Gastrocnemius medialis (tissue), 4 donors: ENCODE measurements at regions of chr4 and their contacts with region 1.

Region 1: DNA sequence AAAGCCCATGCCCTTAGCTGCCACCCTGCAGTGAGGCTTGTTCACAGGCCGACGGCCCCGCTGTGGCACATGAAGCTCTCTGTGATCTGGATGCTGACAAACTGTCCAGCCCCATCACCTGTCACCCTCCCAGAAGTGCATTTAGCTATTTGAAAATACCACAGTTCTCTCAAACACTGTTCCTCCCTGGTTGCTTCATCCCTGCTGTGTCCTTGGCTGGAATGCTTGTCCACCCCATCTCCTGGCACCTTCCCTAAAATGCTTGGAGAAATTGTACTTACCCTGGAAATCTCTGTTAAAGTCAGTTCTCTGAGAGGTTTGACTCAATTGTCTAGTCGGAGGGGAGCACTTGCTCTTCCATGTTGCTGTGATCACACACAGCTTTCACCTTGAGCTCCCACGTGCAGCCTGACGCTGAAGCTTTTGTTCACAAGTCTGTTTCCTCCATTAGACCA is 10.1 kb downstream of the SYNPO2 start:
- DNase-seq: peak; percentile 29 to 73
- ATAC-seq: peak; percentile 79 to 84
- H3K4me3 ChIP-seq: peak overlapping the region; percentile 6 to 25 (median 20)
- H3K27ac ChIP-seq: peak overlapping the region; percentile 72 to 88 (median 85)
- H3K4me1 ChIP-seq: peaks cover 32 to 49% of the 10 kb centered on the region in 2 donors
- H3K27me3 ChIP-seq: no peaks in the 10 kb centered on the region
- CTCF ChIP-seq: no peak
- POLR2A ChIP-seq: peak; percentile 12 to 20

Region 2: GRCh38 chr4:118942465-118942864 is 43.8 kb after region 1 on chr4:
- in situ Hi-C with region 1: no loop called
- intact Hi-C with region 1: loop called (anchors 2 kb)
- DNase-seq: peak; percentile 49 to 78
- ATAC-seq: peak; percentile 86 to 93
- H3K4me3 ChIP-seq: no peak overlapping the region
- H3K27ac ChIP-seq: peak overlapping the region; percentile 63 to 81 (median 70)
- H3K4me1 ChIP-seq: peaks cover 27 to 28% of the 10 kb centered on the region in 2 donors
- H3K27me3 ChIP-seq: no peaks in the 10 kb centered on the region
- CTCF ChIP-seq: no peak
- POLR2A ChIP-seq: no peak

Region 3: DNA sequence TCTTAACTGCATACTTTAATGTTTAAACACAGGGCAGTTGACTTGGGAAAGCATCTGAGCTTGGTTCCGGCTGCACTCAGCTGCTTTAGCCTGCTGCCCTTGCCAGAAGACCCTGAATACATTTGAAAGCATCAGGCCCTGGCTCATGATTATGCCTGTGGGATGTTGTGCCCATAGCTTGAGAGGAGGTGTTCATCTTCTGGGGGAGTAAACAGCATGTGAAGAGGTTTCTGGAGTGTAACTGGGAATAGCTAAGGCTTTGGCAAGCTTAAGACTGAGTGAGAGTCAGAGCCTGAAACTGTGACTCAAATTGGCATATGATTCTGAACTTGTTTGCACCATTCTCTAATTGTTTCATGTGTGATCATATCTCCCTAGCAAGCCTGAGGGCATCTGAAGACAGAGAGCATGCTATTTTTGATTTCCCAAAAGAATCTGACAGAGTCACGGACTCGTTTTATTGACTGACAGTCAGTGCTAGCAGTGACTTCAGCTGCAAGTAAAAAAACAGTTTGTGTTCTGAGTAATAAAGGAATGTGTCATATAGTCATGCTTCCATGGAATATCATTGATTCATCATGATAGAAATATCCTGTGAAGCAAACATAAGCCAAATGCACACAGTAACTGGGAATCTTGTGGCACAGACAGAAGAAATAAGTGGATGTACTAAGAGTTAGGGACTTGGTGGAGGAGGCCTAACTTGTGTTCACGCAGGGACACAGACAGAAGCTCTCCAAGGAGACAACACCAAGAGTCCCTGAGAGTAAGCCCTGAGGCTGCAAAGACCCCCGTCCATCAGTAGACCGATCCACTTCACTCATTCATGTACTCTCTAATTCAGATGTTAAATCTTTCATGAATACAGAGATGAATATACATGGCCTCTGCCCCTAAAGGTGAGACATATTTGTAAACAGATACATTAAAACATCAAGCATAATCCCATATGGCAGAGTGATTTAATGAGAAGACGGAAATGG is 90.7 kb after region 1 on chr4:
- in situ Hi-C with region 1: no loop called
- intact Hi-C with region 1: no loop called
- DNase-seq: peak; percentile 54 to 59
- ATAC-seq: peak; percentile 65 to 71
- H3K4me3 ChIP-seq: peak overlapping the region in 1 of 4 donors; percentile 12
- H3K27ac ChIP-seq: peak overlapping the region; percentile 87 to 99 (median 91)
- H3K4me1 ChIP-seq: peaks cover 80 to 84% of the 10 kb centered on the region in 2 donors
- H3K27me3 ChIP-seq: no peaks in the 10 kb centered on the region
- CTCF ChIP-seq: no peak
- POLR2A ChIP-seq: peak; percentile 70 to 80

Region 4: DNA sequence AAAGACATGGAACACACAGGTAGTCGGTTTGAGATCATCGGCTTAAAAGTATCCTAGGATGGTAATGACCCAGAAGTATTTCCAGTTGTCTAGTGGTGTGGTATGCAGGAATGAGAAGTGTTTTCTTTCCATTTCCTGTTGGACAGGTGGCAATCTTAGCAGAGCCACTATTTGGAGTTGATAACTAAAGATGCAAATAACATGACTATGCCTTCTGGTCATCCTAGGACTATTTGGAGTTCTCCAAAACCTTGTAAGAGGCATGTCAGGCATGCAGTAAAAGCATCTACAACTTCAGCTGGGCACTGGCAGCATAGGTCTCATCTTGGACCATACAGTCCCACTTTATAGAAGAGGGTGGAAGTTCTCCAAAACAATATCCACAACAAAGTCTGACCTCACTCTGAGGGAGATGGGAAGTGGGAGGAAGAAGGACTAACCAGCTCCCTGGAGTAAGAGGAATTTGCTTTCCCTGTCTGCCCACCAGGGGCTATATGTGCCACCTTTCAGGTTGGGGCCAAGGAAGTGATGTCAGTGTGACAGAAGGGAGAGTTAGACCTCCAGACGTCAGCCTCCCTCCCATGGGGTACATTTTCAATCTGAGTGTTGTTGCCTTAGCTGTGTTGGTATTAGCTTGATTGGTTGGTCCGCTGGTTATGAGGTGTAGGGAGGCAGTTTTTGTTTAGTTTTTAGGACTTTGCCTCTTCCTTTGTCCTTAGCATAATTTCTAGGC is 135.7 kb after region 1 on chr4:
- in situ Hi-C with region 1: no loop called
- intact Hi-C with region 1: loop called (anchors 5 kb)
- DNase-seq: no peak
- ATAC-seq: no peak
- H3K4me3 ChIP-seq: peak overlapping the region in 2 of 4 donors; percentile 73 to 74
- H3K27ac ChIP-seq: peak overlapping the region; percentile 94 to 98 (median 96)
- H3K4me1 ChIP-seq: peaks cover 55 to 56% of the 10 kb centered on the region in 2 donors
- H3K27me3 ChIP-seq: no peaks in the 10 kb centered on the region
- CTCF ChIP-seq: no peak
- POLR2A ChIP-seq: peak in 1 of 2 donors; percentile 25

Region 5: DNA sequence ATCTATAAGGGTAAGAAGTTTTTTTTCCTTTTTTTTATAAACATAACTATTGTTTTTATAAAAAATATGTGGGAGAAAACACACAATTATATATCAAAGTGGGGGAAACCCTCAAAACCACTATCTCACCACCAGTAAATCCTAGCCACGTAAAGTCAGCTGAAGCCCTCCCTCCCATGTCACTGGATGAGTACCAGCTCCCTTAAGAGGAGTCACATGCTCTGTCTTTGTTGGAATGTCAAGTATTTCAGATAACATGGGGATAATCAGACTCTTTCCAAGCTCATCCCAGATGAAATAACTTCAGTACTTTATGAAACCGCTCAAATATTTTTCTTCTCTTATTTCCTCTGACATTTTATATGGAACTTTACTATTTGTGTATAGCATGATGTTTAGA is 239.3 kb after region 1 on chr4:
- in situ Hi-C with region 1: no loop called
- intact Hi-C with region 1: loop called (anchors 10 kb)
- DNase-seq: no peak
- ATAC-seq: no peak
- H3K4me3 ChIP-seq: peak overlapping the region in 2 of 4 donors; percentile 32 to 42
- H3K27ac ChIP-seq: peak overlapping the region; percentile 72 to 89 (median 79)
- H3K4me1 ChIP-seq: peaks cover 41 to 43% of the 10 kb centered on the region in 2 donors
- H3K27me3 ChIP-seq: no peaks in the 10 kb centered on the region
- CTCF ChIP-seq: no peak
- POLR2A ChIP-seq: no peak